ENCODE measurements at regions of chr3 and their contacts with region 1.

Region 1: DNA sequence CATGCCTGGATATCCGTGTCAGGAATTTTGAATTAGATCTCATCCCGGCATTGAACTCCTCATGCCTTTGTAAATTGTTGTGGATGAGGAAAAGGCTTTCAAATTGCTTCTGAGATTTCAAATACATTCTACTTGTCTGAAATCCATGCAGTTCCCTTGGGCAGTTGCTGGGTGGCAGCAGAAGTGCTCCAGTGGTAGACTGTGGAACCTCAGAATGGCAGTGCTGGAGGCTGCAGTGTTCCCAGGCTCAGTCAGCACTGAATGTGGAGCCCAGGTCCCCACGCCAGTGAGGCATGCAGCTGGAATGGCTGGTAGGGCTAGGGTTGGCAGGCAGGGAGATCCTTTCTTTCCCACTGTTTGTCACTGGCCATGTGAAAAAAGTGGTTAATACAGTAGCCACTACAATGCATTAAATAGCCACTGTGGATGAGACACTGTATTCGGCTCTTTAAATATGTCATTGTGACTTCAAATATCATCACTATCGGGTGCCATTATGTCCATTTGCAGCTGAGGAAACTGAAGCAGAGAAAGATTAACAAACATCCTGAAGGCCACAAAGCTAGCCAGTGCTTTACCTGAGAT is 98.6 kb downstream of the TPRG1 start:
- DNase-seq: peak; percentile 66 to 73
- ATAC-seq: peak; percentile 88

Region 2: GRCh38 chr3:189144617-189145016 is 125.7 kb before region 1 on chr3:
- intact Hi-C with region 1: no loop called
- DNase-seq: no peak
- ATAC-seq: peak; percentile 95

Region 3: DNA sequence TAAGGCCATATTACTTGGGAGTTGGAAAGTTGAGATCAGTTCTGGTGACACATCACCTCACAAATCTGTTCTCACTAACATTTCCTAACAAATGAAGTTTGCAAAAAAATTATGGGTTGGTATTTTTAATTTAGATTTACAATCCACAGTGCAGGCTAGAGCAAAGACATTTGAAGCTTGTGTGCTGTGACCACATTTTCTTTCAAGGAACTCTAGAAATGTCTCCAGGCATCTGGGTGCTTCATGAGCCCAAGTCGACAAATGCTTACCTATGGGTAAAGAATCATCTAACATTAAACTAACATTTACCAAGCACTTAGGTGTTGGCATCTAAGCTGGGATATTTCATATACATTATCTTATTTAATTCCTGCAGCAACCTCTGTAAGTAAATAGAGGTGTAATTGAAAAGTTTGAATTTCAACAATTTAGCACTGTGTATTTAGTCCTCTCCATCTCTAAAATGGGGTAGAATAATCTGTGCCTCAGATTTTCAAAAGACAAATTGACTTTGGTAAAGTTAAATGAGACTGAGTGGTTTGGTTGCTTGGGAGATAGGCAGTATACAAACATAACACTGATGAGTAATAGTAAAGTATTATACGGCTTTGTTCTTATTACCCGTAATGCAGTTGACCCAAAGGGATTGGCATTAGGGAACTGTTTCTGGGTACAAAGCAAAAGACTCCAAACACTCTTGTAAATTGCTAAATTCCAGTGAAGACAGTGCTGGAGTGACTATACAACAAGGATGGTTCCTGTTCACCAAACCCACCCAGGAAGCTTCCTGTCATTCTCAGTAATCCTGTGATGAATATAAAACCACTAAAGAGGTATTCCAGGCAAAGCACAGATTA is 64.0 kb after region 1 on chr3:
- intact Hi-C with region 1: no loop called
- DNase-seq: no peak
- ATAC-seq: peak; percentile 39

Region 4: GRCh38 chr3:189947948-189948723 is 677.8 kb after region 1 on chr3:
- intact Hi-C with region 1: loop called in 1 of 2 experiments (anchors 10 kb)
- DNase-seq: no peak
- ATAC-seq: no peak

Region 5: GRCh38 chr3:190773948-190774347 is 1503.6 kb after region 1 on chr3:
- intact Hi-C with region 1: no loop called
- DNase-seq: no peak
- ATAC-seq: no peak

Measured in left colon (tissue), 2 donors.